ENCODE measurements at regions of chr13 and their contacts with region 1.

Region 1: DNA sequence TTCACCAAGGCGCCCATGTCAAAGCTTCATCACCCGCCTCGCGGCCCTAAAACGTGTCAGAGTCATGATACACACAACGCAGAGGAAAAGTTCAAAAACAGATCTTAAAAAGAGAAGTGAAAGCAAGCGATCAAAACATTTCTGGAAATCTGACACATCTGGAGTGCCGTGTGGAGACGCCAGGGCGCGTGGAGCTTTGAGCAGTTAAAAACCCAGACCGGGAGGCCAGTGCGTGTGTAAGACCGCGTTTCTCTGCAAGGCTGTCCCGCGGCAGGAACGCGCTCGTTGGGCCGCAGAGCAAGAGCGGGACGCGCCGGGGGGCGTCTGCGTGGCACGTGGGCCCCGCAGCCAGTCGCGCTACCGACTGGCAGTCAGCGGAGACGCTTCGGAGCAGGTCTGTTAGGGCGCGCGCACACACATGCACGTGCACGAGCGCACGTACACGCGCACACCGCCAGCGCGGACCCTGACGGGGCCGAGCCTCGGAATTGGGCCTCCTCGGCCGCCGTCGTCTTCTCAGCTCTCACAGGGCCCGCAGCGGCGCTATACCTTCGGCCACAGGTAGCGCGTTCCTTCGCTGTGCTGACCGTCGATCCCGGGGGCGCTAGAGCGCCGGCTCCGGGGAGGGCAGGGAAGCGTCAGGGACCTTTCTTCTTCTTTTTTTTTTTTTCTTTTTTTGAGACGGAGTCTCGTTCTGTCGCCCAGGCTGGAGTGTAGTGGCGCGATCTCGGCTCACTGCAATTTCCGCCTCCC is 35.8 kb downstream of the RNF6 start:
- DNase-seq: peak; percentile 94 to 95 (median 95)
- ATAC-seq: peak; percentile 100
- H3K4me3 ChIP-seq: peak overlapping the region; percentile 43
- H3K4me1 ChIP-seq: no peaks in the 10 kb centered on the region
- CTCF ChIP-seq: peak; percentile 45

Region 2: DNA sequence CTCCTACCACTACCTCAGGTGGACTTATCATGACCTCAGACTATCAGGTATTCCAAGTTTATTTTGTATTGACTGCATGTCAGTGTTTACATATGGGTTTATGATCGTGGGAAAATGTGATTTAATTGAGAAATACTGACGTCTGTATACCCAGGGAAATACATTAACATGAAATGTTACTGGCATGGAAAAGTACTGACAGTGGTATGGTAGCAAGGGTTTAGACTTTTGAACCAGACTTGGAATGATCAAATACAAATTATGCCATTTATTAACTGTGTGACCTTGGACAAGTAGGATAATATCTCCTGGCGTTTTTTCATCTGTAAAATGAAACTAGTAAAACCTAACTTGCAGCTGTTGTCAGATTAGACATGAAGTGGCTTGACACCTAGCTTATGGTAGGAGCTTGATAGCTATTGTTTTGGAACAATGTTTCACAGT is 215.3 kb after region 1 on chr13:
- intact Hi-C with region 1: no loop called
- DNase-seq: no peak
- ATAC-seq: peak; percentile 42
- H3K4me3 ChIP-seq: no peak overlapping the region
- H3K4me1 ChIP-seq: no peaks in the 10 kb centered on the region
- CTCF ChIP-seq: no peak

Region 3: GRCh38 chr13:26619358-26619757 is 433.1 kb after region 1 on chr13:
- intact Hi-C with region 1: no loop called
- DNase-seq: no peak
- ATAC-seq: no peak
- H3K4me3 ChIP-seq: no peak overlapping the region
- H3K4me1 ChIP-seq: peaks cover 11% of the 10 kb centered on the region
- CTCF ChIP-seq: no peak

Region 4: DNA sequence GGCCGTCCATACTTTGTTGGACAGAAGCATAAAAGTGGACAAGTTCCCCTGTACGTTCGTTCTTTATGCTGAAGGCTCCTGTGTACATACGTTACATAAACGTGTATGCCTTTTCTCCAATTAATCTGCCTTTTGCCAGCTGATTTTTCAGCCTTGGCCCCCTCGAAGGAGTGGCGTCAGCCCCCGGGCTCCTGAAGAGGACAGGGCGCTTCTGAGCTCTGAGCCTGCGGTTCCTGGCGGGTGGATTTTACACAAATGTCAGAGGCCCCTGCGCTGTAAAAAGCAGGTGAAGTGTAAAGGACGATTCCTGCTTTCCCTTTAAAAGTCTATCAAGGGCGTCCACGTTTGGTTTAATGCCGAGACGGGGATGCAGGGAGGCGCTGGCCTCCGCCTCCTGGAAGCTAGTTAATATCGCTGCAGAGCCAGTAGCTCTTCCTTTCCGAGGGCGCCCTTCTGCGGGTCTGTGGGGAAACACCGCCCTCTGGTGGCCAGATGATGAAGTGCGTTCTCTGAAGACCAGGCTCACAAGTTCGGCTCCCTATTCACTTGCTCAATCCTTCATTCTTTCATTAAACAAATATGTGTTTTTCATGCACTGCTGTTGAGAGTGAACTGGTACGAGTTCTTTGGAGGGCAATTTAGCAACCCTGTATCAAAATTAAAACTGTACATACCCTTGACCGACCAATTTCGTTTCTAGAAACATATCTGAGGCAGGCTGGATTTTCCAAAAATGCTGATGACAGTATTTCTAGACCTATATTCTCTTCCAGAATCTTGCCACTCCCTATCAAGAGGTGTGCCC is 512.3 kb after region 1 on chr13:
- intact Hi-C with region 1: loop called (anchors 5 to 10 kb)
- DNase-seq: peak; percentile 71 to 88 (median 86)
- ATAC-seq: peak; percentile 96
- H3K4me3 ChIP-seq: no peak overlapping the region
- H3K4me1 ChIP-seq: no peaks in the 10 kb centered on the region
- CTCF ChIP-seq: peak; percentile 94